GM12878 (cell line): ENCODE measurements at regions of chr5 and their contacts with region 1.

Region 1: DNA sequence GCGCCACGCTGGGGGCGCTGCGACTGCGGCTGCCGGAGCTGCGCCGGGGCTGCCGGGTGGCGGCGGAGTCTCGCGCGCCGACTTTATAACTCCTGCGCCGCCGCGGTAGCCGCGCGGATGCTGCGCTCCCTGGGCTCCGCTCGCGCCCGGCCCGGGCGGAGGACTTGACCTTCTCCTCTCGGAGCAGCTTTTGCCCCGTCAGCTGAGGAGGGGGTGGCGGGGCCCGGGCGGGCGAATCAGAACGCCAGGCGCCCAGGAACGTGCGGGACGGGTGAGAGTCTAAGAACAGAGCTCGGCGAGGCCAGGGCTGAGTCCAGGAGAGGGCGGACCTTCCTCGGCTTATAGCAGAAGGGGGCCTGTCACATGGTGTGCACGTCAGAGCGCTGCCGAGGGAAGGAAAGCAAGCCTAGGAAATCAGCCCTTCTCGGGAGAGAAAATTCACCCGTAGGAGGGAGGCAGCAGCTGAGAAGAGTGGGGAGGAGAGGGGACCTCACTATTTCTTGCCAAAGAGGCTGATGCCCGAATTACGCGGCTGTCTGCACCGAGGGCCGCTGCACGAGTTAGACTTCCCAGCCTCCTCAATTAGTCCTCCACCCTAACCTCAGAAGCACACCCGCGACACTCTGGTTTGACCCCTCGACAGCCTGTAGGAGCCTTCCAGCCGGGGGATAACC is at the start of gene FOXD1:
- DNase-seq: no peak
- ATAC-seq: peak; percentile 80
- H3K4me3 ChIP-seq: peak within 1 kb of the TSS; percentile 57; the same call in 1 of the 2 replicates
- H3K27ac ChIP-seq: no peak within 1 kb of the TSS
- H3K4me1 ChIP-seq: no peaks in the 10 kb centered on the region
- H3K27me3 ChIP-seq: peaks cover 13 to 38% of the 10 kb centered on the region in 2 experiments
- CTCF ChIP-seq: no peak
- EP300 ChIP-seq: no peak
- POLR2A ChIP-seq: peak; percentile 49; the same call in 1 of the 2 replicates
- RAD21 ChIP-seq: no peak
- polyA plus RNA-seq, gene FOXD1: not detected

Region 2: DNA sequence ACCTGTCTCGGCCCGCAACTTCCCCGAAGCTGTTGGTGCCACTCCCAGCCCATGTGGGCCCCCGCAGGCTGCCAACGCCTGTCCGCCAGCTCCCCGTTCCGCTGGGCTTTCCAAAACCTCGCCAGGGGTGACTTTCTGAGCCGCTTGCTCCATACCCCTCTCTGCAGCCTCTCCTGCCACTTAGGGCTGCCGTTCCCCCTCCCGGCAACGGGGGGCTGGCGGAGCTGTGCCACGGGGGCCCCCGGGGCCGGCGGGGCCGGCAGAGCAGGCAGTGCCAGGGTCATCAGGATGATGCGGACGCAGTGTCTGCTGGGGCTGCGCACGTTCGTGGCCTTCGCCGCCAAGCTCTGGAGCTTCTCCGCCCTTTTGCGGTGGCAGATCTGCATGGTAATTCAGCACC is 452.0 kb before region 1 on chr5:
- CTCF ChIA-PET with region 1: no interaction called
- POLR2A ChIA-PET with region 1: no interaction called
- RAD21 ChIA-PET with region 1: no interaction called
- SMC1A ChIA-PET with region 1: no interaction called
- in situ Hi-C with region 1: no loop called
- intact Hi-C with region 1: no loop called
- DNase-seq: no peak
- ATAC-seq: no peak
- H3K4me3 ChIP-seq: no peak overlapping the region
- H3K27ac ChIP-seq: no peak overlapping the region
- H3K4me1 ChIP-seq: no peaks in the 10 kb centered on the region
- H3K27me3 ChIP-seq: no peaks in the 10 kb centered on the region
- CTCF ChIP-seq: no peak
- EP300 ChIP-seq: no peak
- POLR2A ChIP-seq: no peak
- RAD21 ChIP-seq: no peak

Region 3: DNA sequence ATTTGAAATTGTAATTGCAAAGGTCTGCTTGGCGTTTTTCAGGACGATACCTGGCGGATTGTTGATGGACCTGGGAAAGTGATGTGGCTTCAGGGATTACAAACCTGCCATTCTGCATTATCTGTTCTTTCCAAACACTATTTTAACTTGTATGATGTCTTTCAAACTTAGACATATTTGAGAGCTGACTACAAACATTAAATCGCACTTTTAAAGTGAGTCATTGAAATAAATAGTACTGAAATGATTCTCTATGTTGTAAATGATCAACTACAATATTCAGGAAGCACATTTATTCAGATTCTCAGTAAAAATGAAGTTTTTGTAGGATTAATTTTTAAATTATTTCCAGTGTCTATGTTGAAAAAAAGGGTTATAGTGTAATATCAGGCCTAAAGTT is 360.6 kb before region 1 on chr5:
- CTCF ChIA-PET with region 1: interaction called, 5 read pairs
- POLR2A ChIA-PET with region 1: no interaction called
- RAD21 ChIA-PET with region 1: interaction called, 3 read pairs
- SMC1A ChIA-PET with region 1: no interaction called
- in situ Hi-C with region 1: loop called (anchors 10 kb)
- intact Hi-C with region 1: loop called (anchors 2 kb)
- DNase-seq: no peak
- ATAC-seq: no peak
- H3K4me3 ChIP-seq: no peak overlapping the region
- H3K27ac ChIP-seq: no peak overlapping the region
- H3K4me1 ChIP-seq: no peaks in the 10 kb centered on the region
- H3K27me3 ChIP-seq: no peaks in the 10 kb centered on the region
- CTCF ChIP-seq: no peak
- EP300 ChIP-seq: no peak
- POLR2A ChIP-seq: no peak
- RAD21 ChIP-seq: no peak

Region 4: DNA sequence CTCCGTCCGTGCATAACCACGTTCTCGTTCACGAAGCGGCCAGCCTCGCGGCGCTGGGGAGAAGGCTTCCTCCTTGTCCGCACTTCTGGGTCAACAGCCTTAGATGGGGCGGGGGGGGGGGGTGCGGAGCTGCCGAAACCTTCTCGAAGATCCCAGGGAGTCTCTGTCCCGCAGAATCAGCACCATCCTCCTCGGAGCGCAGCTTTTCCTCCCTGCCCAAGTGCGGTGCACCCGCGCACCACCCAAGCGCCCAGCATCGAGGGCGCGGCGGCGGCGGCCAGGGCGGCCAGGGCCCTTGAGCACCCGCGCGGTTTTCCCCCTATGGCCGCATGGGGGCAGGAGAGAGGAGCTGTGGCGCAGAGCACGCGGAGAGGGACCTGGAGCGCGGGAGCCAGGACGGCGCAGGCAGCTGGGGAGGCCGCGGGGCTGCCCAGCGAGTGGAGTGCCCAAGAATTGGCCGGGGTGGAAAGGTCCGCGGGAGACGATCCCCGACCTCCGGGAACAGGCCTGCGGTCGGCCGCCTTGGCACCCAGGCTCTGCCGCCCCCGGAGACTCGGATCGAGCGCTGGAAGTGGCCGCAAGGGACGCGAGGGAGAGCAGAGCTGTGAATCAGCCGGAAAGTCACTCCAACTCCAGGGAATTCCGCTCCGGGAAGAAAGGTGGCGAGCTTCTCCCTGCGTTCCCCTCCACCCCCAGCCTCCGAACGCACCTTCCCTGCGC is 232.5 kb before region 1 on chr5:
- CTCF ChIA-PET with region 1: interaction called, 8 read pairs
- POLR2A ChIA-PET with region 1: no interaction called
- RAD21 ChIA-PET with region 1: interaction called, 8 read pairs
- SMC1A ChIA-PET with region 1: no interaction called
- in situ Hi-C with region 1: no loop called
- intact Hi-C with region 1: loop called (anchors 2 kb)
- DNase-seq: no peak
- ATAC-seq: peak; percentile 99
- H3K4me3 ChIP-seq: no peak overlapping the region
- H3K27ac ChIP-seq: no peak overlapping the region
- H3K4me1 ChIP-seq: peaks cover 7% of the 10 kb centered on the region
- H3K27me3 ChIP-seq: peaks cover 14 to 16% of the 10 kb centered on the region in 2 experiments
- CTCF ChIP-seq: peak; percentile 55 to 70 (median 56); a peak in 5 of 6 replicates
- EP300 ChIP-seq: no peak
- POLR2A ChIP-seq: no peak
- RAD21 ChIP-seq: peak; percentile 27; the same call in 1 of the 2 replicates

Region 5: GRCh38 chr5:73387601-73388305 is 60.8 kb before region 1 on chr5:
- CTCF ChIA-PET with region 1: no interaction called
- POLR2A ChIA-PET with region 1: no interaction called
- RAD21 ChIA-PET with region 1: no interaction called
- SMC1A ChIA-PET with region 1: no interaction called
- in situ Hi-C with region 1: no loop called
- intact Hi-C with region 1: loop called (anchors 10 kb)
- DNase-seq: peak; percentile 76
- ATAC-seq: peak; percentile 93
- H3K4me3 ChIP-seq: peak overlapping the region; percentile 22; the same call in 1 of the 2 replicates
- H3K27ac ChIP-seq: peak overlapping the region; percentile 39
- H3K4me1 ChIP-seq: peaks cover 11% of the 10 kb centered on the region
- H3K27me3 ChIP-seq: no peaks in the 10 kb centered on the region; a peak in 1 of 4 replicates
- CTCF ChIP-seq: no peak
- EP300 ChIP-seq: peak in 1 of 2 experiments; percentile 72; a peak in 3 of 4 replicates
- POLR2A ChIP-seq: no peak
- RAD21 ChIP-seq: no peak